ENCODE measurements at regions of chr4 and their contacts with region 1.

Region 1: GRCh38 chr4:177047070-177047850 is 254.5 kb upstream of the VEGFC start:
- DNase-seq: peak; percentile 59
- H3K4me3 Mint-ChIP-seq: no peak overlapping the region
- H3K27ac Mint-ChIP-seq: no peak overlapping the region
- H3K4me1 Mint-ChIP-seq: no peaks in the 10 kb centered on the region
- H3K27me3 Mint-ChIP-seq: peaks cover 3% of the 10 kb centered on the region

Region 2: GRCh38 chr4:175947117-175947722 is 1100.0 kb before region 1 on chr4:
- CTCF ChIA-PET with region 1: interaction called, 3 read pairs
- POLR2A ChIA-PET with region 1: no interaction called
- intact Hi-C with region 1: loop called (anchors 5 kb)
- DNase-seq: no peak
- H3K4me3 Mint-ChIP-seq: no peak overlapping the region
- H3K27ac Mint-ChIP-seq: no peak overlapping the region
- H3K4me1 Mint-ChIP-seq: peaks cover 6% of the 10 kb centered on the region
- H3K27me3 Mint-ChIP-seq: peaks cover 3% of the 10 kb centered on the region

Region 3: GRCh38 chr4:176377780-176378179 is 669.5 kb before region 1 on chr4:
- CTCF ChIA-PET with region 1: interaction called, 54 read pairs
- POLR2A ChIA-PET with region 1: no interaction called
- intact Hi-C with region 1: no loop called
- DNase-seq: no peak
- H3K4me3 Mint-ChIP-seq: no peak overlapping the region
- H3K27ac Mint-ChIP-seq: no peak overlapping the region
- H3K4me1 Mint-ChIP-seq: no peaks in the 10 kb centered on the region
- H3K27me3 Mint-ChIP-seq: peaks cover 3% of the 10 kb centered on the region

Region 4: DNA sequence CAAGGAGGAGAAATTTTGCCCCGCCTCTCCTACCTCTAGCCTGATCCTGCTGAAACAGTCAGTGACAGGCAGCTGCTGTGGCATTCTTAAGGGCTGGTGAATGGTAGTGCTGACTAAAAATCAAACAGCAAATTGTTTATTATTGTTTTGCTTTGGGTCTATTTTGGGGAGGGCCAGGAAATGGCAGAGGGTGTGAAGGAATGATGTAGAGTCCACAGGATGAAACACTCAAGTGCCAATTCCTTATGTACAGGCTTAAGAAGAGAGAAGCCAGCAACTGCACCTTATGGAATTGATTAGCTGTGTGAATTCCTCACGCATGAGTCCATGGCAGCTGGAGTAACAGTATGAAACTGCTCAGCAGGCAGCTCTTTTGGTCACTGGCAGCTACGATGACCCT is 294.2 kb before region 1 on chr4:
- CTCF ChIA-PET with region 1: no interaction called
- POLR2A ChIA-PET with region 1: no interaction called
- intact Hi-C with region 1: no loop called
- DNase-seq: no peak
- H3K4me3 Mint-ChIP-seq: no peak overlapping the region
- H3K27ac Mint-ChIP-seq: no peak overlapping the region
- H3K4me1 Mint-ChIP-seq: no peaks in the 10 kb centered on the region
- H3K27me3 Mint-ChIP-seq: peaks cover 2% of the 10 kb centered on the region

Region 5: GRCh38 chr4:176789955-176790354 is 257.3 kb before region 1 on chr4:
- CTCF ChIA-PET with region 1: interaction called, 5 read pairs
- POLR2A ChIA-PET with region 1: no interaction called
- intact Hi-C with region 1: loop called (anchors 5 kb)
- DNase-seq: no peak
- H3K4me3 Mint-ChIP-seq: no peak overlapping the region
- H3K27ac Mint-ChIP-seq: no peak overlapping the region
- H3K4me1 Mint-ChIP-seq: peaks cover 6% of the 10 kb centered on the region
- H3K27me3 Mint-ChIP-seq: peaks cover 39% of the 10 kb centered on the region

Region 6: GRCh38 chr4:176979416-176979815 is 67.8 kb before region 1 on chr4:
- CTCF ChIA-PET with region 1: no interaction called
- POLR2A ChIA-PET with region 1: no interaction called
- intact Hi-C with region 1: no loop called
- DNase-seq: no peak
- H3K4me3 Mint-ChIP-seq: no peak overlapping the region
- H3K27ac Mint-ChIP-seq: no peak overlapping the region
- H3K4me1 Mint-ChIP-seq: no peaks in the 10 kb centered on the region
- H3K27me3 Mint-ChIP-seq: no peaks in the 10 kb centered on the region

Region 7: DNA sequence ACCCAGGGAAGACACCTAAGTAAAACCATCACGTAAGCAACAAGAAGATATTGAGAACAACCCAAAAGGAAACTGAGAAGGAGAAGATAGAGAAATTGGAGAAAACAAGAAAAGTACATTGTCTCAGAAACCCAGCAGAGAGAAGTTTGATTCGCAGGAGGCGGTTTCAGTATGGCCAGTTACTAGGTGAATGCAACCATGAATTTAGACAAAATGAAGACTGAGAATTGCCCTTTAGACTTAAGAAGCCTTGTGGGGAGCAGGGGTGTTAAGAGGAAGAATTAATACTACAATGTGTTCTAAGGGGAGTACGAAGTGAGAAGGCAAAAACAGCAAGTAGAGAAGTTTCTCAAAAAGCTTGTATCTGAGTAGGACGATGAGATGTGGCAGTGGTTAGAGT is 33.1 kb after region 1 on chr4:
- CTCF ChIA-PET with region 1: no interaction called
- POLR2A ChIA-PET with region 1: no interaction called
- intact Hi-C with region 1: no loop called
- DNase-seq: no peak
- H3K4me3 Mint-ChIP-seq: no peak overlapping the region
- H3K27ac Mint-ChIP-seq: no peak overlapping the region
- H3K4me1 Mint-ChIP-seq: no peaks in the 10 kb centered on the region
- H3K27me3 Mint-ChIP-seq: no peaks in the 10 kb centered on the region

Region 8: DNA sequence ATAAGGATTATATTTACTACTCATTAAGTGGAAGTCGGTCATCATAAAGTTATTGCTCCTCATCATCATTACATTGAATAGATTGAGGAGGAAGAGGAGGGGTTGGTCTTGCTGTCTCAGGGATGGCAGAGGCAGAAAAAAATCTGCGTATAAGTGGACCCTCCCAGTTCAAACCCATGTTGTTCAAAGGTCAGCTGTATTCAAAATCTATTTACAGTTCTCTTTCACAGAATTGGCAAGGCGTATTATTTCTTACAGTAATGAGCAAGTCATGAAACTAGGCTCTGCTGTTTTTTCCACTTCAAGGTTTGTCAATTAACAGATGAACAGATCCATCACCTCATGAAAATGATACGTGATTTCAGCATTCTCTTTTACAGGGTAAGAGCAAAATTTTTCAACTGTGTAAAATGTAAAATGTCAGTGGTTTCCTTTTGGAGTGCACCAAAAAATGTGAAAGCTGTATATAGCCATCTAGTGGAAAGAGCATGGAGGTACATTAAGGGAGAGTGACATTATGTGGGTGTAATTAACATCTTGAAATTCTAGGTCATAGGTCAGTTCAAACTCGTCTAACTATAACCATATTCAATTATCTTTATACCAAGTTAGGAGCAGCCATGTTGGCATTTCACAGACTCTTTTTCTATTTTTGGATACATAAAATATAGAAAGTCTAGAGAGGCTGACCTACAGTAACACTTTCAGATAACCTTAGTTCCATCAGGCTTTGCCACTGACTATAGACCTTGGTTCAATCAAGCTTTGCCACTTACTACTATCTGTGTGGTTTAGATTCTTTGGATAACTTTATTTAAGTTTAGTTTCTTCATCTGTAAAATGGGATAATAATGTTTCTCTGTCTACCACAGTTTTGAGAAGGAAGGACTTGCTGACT is 292.5 kb after region 1 on chr4:
- CTCF ChIA-PET with region 1: interaction called, 5 read pairs
- POLR2A ChIA-PET with region 1: no interaction called
- intact Hi-C with region 1: loop called (anchors 2 kb)
- DNase-seq: no peak
- H3K4me3 Mint-ChIP-seq: no peak overlapping the region
- H3K27ac Mint-ChIP-seq: no peak overlapping the region
- H3K4me1 Mint-ChIP-seq: peaks cover 12% of the 10 kb centered on the region
- H3K27me3 Mint-ChIP-seq: no peaks in the 10 kb centered on the region

Region 9: GRCh38 chr4:178086320-178086719 is 1039.1 kb after region 1 on chr4:
- CTCF ChIA-PET with region 1: no interaction called
- POLR2A ChIA-PET with region 1: no interaction called
- intact Hi-C with region 1: no loop called
- DNase-seq: no peak
- H3K4me3 Mint-ChIP-seq: no peak overlapping the region
- H3K27ac Mint-ChIP-seq: no peak overlapping the region
- H3K4me1 Mint-ChIP-seq: no peaks in the 10 kb centered on the region
- H3K27me3 Mint-ChIP-seq: no peaks in the 10 kb centered on the region